Mammary epithelial cell (primary cell): ENCODE measurements at regions of chr7 and their contacts with region 1.

Region 1: DNA sequence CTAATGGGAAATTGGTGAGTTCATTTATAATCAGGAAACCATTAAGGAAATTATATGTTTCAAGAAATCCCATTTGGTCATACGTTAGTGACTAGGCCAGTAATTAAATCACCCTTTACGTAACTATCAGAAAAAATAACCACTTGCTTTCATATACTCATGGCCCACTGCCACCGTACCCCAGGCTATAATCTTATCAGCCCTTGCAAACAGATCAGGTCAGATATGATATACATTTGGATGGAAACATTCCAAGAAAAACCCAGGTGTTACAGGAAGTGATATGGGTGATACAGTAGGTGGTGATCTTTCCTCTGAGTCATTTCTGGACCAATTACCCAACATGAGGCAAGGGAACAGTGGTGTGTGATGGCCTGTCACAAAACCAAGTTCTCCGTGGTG is 481.0 kb upstream of the SEMA3A start:
- DNase-seq: peak; percentile 85
- H3K4me3 ChIP-seq: no peak overlapping the region
- H3K27ac ChIP-seq: peak overlapping the region; percentile 80
- H3K4me1 ChIP-seq: peaks cover 41% of the 10 kb centered on the region
- H3K27me3 ChIP-seq: no peaks in the 10 kb centered on the region
- CTCF ChIP-seq: no peak

Region 2: GRCh38 chr7:84529480-84530205 is 146.0 kb before region 1 on chr7:
- CTCF ChIA-PET with region 1: no interaction called
- dilution Hi-C with region 1: no loop called
- in situ Hi-C with region 1: no loop called
- intact Hi-C with region 1: loop called (anchors 10 kb)
- DNase-seq: peak; percentile 75
- H3K4me3 ChIP-seq: no peak overlapping the region
- H3K27ac ChIP-seq: peak overlapping the region; percentile 48
- H3K4me1 ChIP-seq: peaks cover 15% of the 10 kb centered on the region
- H3K27me3 ChIP-seq: no peaks in the 10 kb centered on the region
- CTCF ChIP-seq: no peak